PC-9 (cell line): ENCODE measurements at regions of chr1 and their contacts with region 1.

Region 1: GRCh38 chr1:6343506-6344405 is 49.8 kb downstream of the ACOT7 start:
- DNase-seq: peak; percentile 88 to 92
- H3K4me3 ChIP-seq: no peak overlapping the region
- H3K27ac ChIP-seq: no peak overlapping the region
- H3K4me1 ChIP-seq: peaks cover 7% of the 10 kb centered on the region
- H3K27me3 ChIP-seq: no peaks in the 10 kb centered on the region
- CTCF ChIP-seq: peak; percentile 93

Region 2: GRCh38 chr1:5099558-5100252 is 1244.1 kb before region 1 on chr1:
- CTCF ChIA-PET with region 1: no interaction called
- POLR2A ChIA-PET with region 1: no interaction called
- intact Hi-C with region 1: no loop called
- DNase-seq: peak in 1 of 2 experiments; percentile 0
- H3K4me3 ChIP-seq: no peak overlapping the region
- H3K27ac ChIP-seq: no peak overlapping the region
- H3K4me1 ChIP-seq: no peaks in the 10 kb centered on the region
- H3K27me3 ChIP-seq: no peaks in the 10 kb centered on the region; the same call in 1 of the 2 replicates
- CTCF ChIP-seq: no peak

Region 3: GRCh38 chr1:5620990-5621389 is 722.8 kb before region 1 on chr1:
- CTCF ChIA-PET with region 1: no interaction called
- POLR2A ChIA-PET with region 1: no interaction called
- intact Hi-C with region 1: no loop called
- DNase-seq: no peak
- H3K4me3 ChIP-seq: no peak overlapping the region
- H3K27ac ChIP-seq: no peak overlapping the region
- H3K4me1 ChIP-seq: no peaks in the 10 kb centered on the region
- H3K27me3 ChIP-seq: no peaks in the 10 kb centered on the region
- CTCF ChIP-seq: peak; percentile 53

Region 4: DNA sequence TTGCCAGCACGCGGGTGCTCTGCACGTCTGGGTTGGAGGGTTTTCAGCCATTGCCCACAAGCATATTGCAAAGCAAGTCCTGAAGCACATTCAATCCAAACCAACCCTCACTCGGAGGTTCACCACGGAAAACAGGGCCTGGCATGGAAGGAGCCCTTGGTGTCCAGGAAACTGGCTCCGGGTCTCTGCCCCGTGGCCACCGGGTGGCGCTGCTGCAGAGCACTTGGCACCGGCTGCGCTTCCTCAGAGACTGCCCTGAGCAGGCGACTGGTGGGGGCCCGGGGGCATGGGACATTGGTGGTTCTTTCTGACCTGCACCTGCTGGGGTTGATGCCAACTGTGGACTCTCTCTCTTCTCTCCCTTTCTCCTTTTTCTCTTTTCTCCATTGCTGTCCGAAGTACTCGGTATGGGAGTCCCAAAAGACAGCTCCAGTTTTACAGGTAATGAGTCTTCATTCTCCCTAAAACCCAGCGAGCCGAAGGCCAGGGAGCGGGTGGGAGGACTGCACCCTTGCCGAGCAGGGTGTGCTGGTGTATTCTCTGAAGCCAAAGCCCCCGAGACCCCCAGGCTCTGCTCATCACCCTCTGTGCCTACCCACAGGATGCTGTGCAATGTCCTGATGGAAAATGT is 302.2 kb before region 1 on chr1:
- CTCF ChIA-PET with region 1: no interaction called
- POLR2A ChIA-PET with region 1: no interaction called
- intact Hi-C with region 1: loop called (anchors 5 kb)
- DNase-seq: peak in 1 of 2 experiments; percentile 44
- H3K4me3 ChIP-seq: no peak overlapping the region
- H3K27ac ChIP-seq: no peak overlapping the region
- H3K4me1 ChIP-seq: no peaks in the 10 kb centered on the region
- H3K27me3 ChIP-seq: no peaks in the 10 kb centered on the region
- CTCF ChIP-seq: peak; percentile 62

Region 5: DNA sequence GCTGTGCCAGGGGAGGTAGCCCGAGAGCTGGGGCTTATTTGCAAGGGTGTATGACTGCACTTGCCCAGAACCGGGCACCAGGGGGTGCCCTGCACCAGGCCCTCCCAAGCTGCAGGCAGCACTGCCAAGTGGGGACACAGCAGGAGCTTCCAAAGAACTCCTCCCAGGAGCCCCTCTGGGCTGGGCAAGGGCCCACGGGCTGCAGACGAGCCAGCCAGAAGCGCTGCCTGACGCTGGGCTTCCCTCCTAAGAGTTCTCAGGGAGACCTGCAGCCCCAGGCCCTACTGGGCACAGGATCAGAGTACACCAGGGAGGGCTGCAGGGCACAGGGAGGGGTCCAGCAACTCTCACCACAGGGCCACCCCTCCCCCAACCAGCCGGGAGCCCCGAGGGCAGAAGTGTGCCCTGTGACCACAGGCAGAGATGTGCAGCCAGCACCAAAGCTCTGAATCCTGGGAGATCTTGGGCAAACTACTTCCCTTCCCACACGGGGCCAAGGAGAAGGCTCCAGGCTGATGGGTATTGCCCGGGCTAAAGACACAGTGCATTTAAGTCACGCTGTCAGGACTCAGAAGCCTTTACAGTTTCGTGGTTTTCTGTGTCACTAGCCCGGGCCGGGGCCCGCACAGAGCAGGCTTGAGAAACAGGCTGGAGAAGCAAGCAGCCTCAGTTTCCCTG is 234.7 kb before region 1 on chr1:
- CTCF ChIA-PET with region 1: no interaction called
- POLR2A ChIA-PET with region 1: interaction called, 3 read pairs
- intact Hi-C with region 1: loop called (anchors 1 kb)
- DNase-seq: peak; percentile 34 to 62
- H3K4me3 ChIP-seq: no peak overlapping the region
- H3K27ac ChIP-seq: no peak overlapping the region
- H3K4me1 ChIP-seq: no peaks in the 10 kb centered on the region
- H3K27me3 ChIP-seq: 0 out of 2 replicates have a peak, but pooled peaks cover 6% of the 10 kb centered on the region
- CTCF ChIP-seq: peak; percentile 74

Region 6: DNA sequence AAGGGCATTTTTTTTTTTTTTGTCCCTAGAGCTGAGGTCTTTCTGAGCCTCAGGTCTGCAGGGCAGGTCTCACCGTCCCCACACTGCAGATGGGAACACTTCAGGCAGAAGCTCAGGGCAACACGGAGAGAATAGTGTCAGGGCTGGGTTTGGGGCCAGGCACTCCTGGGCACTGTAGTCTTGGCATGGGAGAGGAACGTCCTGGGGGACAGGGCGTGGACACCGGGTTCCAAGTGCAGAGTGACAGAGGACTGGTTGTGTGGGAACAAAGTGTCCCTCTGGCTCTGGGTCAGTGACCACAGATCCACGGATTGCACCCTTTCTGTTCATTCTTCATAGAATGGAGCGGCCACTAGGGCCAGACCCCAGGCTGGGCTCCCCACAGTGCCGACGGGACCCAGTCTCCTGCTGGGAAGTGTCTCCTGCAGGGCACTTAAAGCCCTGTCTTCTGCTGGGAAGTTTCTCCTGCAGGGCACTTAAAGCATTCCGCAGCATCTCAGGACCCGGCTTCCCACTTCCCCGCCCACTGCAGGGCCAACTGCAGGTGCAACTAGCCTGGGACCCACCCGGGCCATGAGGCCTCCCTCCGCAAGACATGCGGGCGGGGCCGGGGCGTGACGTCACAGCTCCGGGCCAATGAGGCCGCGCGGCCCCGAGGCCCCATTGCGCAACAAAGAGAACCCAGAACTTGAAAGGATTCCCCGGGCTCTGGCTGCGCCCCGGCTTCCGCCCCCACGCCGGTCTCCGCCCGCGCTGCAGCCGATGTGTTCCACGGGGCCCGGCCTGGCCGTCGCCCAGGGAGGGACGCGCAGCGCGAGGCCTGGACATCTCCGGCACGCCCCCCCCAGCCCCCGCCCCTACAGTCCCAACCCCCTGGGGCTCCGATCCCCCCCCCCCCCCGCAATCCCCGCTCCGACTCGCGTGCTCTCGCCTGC is 84.0 kb before region 1 on chr1:
- CTCF ChIA-PET with region 1: no interaction called
- POLR2A ChIA-PET with region 1: no interaction called
- intact Hi-C with region 1: loop called (anchors 5 kb)
- DNase-seq: peak; percentile 55 to 79
- H3K4me3 ChIP-seq: peak overlapping the region; percentile 54; the same call in 1 of the 2 replicates
- H3K27ac ChIP-seq: no peak overlapping the region
- H3K4me1 ChIP-seq: no peaks in the 10 kb centered on the region
- H3K27me3 ChIP-seq: no peaks in the 10 kb centered on the region
- CTCF ChIP-seq: no peak

Region 7: GRCh38 chr1:6317098-6317760 is 26.5 kb before region 1 on chr1:
- CTCF ChIA-PET with region 1: no interaction called
- POLR2A ChIA-PET with region 1: interaction called, 10 read pairs
- intact Hi-C with region 1: no loop called
- DNase-seq: peak in 1 of 2 experiments; percentile 26
- H3K4me3 ChIP-seq: no peak overlapping the region
- H3K27ac ChIP-seq: peak overlapping the region; percentile 58
- H3K4me1 ChIP-seq: no peaks in the 10 kb centered on the region
- H3K27me3 ChIP-seq: no peaks in the 10 kb centered on the region
- CTCF ChIP-seq: no peak

Region 8: DNA sequence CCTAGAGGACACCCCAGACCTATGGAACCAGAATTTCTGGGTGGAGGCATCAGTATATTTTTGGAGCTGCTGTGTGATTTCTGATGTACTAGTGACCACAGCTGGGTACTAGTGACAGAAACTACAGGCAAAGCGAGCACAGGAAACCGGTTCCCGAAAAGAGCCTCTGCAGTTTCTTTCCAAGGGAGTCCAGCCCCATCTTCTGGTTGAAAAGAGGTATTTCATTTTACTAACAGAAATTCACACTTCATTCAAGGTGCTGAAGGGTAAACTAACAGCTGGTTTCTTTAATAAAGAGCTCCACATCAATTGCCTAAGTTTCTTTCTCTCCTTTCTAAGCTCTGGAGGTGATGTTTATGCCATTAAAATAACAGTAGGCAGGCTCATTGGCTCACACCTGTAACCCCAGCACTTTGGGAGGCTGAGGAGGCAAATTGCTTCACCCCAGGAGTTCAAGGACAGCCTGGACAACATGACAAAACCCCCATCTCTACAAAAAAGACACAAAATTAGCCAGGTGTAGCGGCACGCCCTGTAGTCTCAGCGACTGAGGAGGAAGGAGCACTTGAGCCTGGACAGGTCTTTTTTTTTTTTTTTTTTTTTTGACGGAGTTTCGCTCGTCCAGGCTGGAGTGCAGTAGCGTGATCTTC is 302.9 kb after region 1 on chr1:
- CTCF ChIA-PET with region 1: no interaction called
- POLR2A ChIA-PET with region 1: no interaction called
- intact Hi-C with region 1: loop called (anchors 5 kb)
- DNase-seq: peak; percentile 7 to 40
- H3K4me3 ChIP-seq: no peak overlapping the region
- H3K27ac ChIP-seq: no peak overlapping the region
- H3K4me1 ChIP-seq: no peaks in the 10 kb centered on the region
- H3K27me3 ChIP-seq: no peaks in the 10 kb centered on the region
- CTCF ChIP-seq: peak; percentile 64